Ascending aorta (tissue), 2 donors: ENCODE measurements at regions of chr16 and their contacts with region 1.

Region 1: GRCh38 chr16:84933774-84934631 is 77.3 kb downstream of the ZDHHC7 start:
- DNase-seq: peak; percentile 64 to 91
- H3K4me3 ChIP-seq: peak overlapping the region in 1 of 2 donors; percentile 24
- H3K27ac ChIP-seq: peak overlapping the region; percentile 82 to 91
- H3K4me1 ChIP-seq: peaks cover 11 to 21% of the 10 kb centered on the region in 2 donors
- H3K27me3 ChIP-seq: no peaks in the 10 kb centered on the region
- CTCF ChIP-seq: no peak

Region 2: GRCh38 chr16:84819644-84820324 is 114.2 kb before region 1 on chr16 and contains the start of gene CRISPLD2:
- intact Hi-C with region 1: no loop called
- DNase-seq: peak; percentile 64 to 94
- H3K4me3 ChIP-seq: peak within 1 kb of the TSS; percentile 48 to 67
- H3K27ac ChIP-seq: peak within 1 kb of the TSS in 1 of 2 donors; percentile 59
- H3K4me1 ChIP-seq: peaks cover 4 to 11% of the 10 kb centered on the region in 2 donors
- H3K27me3 ChIP-seq: no peaks in the 10 kb centered on the region
- CTCF ChIP-seq: peak in 1 of 3 experiments; percentile 13
- total RNA-seq, gene CRISPLD2: 204 TPM

Region 3: DNA sequence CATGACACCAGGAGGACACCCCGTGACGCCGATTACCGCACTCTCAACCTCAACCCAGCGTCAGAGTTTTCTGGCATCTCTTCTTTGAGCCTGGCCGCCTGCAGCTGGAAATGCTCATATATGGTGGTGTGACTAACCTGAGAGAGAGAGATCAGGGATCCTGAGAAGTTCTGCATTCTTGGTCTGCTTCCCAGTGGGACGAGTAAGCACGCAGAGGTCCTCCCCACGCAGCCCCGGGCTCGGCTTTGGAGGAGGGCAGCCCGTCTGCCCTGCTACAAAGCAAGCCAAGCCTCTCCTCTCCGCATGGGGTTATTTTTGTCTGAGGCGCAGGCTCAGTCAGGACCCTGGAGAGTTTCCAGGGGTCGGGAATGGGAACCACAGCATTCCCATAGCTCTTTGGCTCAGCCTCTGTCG is 97.8 kb before region 1 on chr16:
- intact Hi-C with region 1: loop called (anchors 5 kb)
- DNase-seq: peak; percentile 32 to 92
- H3K4me3 ChIP-seq: peak overlapping the region in 1 of 2 donors; percentile 21
- H3K27ac ChIP-seq: peak overlapping the region; percentile 71 to 75
- H3K4me1 ChIP-seq: peaks cover 3 to 14% of the 10 kb centered on the region in 2 donors
- H3K27me3 ChIP-seq: no peaks in the 10 kb centered on the region
- CTCF ChIP-seq: no peak